ENCODE measurements at regions of chr5 and their contacts with region 1.

Region 1: DNA sequence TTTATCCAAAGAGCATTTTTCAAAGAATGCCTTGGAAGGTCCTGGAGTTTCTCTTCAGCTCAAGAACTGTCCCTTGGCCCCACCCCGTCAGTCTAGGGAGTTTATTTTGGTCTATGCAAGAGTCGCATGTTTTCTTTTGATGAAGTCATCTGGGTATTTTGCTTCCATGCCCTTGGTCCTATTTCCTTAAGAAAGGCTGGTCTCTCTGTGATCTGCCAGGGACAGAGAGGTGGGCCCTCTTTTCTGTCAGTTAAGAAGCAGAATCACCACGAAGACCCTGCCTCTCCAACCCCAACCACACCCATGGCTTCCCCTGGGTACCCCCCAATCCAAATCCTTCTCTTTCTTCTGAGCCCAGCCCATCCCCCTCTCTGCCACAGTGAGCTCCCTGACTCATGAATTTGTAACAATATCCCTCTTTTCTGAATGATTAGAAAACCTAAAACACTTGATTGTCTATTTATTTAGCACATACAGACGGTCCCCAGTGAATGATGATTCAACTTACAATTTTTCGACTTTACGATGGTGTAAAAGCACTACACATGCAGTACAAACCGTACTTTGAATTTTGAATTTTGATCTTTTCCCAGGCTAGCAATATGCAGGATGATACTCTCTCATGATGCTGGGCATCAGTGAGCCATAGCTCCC is 163.5 kb upstream of the ADRA1B start:
- DNase-seq: no peak
- ATAC-seq: no peak
- H3K4me3 ChIP-seq: no peak overlapping the region
- H3K27ac ChIP-seq: peak overlapping the region in 1 of 12 donors; percentile 49
- H3K4me1 ChIP-seq: peaks cover 0 to 4% (median 0%) of the 10 kb centered on the region in 12 donors
- H3K27me3 ChIP-seq: no peaks in the 10 kb centered on the region
- CTCF ChIP-seq: no peak
- POLR2A ChIP-seq: no peak

Region 2: DNA sequence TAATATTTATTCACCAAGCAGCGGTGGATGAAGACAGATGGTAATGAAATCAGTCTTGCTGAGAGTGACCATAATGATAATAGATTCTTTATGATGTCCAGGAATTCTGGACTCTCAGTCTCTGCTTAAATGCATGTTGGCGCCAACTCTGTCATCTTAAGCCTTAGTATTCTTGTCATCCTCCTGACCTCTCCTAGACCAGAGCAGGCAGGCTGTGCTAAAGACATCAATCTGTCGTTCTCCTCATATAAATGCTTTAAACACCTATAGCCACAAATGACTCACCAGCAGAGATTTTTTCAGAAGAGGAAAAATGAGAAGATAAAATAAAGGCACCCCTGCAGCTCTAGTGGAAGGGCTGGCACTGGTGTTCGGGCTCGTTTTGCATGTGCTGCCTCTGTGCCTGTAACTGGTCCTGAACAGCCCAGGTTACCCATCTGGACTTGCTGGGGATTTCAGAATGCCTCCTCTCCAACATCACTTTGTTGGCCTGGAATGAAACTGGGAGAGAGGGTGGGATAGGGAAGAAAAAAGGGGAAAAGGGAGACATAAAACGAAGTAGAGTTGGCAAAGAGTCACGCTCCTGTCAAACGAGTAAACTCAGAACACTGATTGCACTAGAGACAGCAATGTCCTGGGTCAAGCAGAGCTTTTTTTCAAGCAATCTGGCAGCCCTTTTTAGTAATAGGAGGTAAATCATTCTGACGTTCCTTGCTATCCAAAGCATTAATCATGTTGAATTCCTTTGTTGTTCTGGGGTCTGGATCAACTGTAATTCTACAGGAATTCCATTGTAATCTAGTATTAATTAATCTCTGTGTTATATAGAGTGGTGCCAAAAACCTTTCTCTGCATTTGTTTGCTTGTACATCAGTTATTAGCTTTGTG is 1698.3 kb before region 1 on chr5:
- intact Hi-C with region 1: loop called in 1 of 10 experiments (anchors 5 kb)
- DNase-seq: no peak
- ATAC-seq: no peak
- H3K4me3 ChIP-seq: no peak overlapping the region
- H3K27ac ChIP-seq: no peak overlapping the region
- H3K4me1 ChIP-seq: no peaks in the 10 kb centered on the region
- H3K27me3 ChIP-seq: peaks cover 0 to 5% (median 0%) of the 10 kb centered on the region in 9 donors
- CTCF ChIP-seq: no peak
- POLR2A ChIP-seq: no peak